Activated CD4-positive, alpha-beta memory T cell treated with anti-CD3 and anti-CD28 coated beads for 36 hours (primary cell): ENCODE measurements at regions of chr10 and their contacts with region 1.

Region 1: GRCh38 chr10:101840741-101841453 is 2.7 kb downstream of the KCNIP2 start:
- DNase-seq: peak; percentile 88
- H3K4me3 Mint-ChIP-seq: peak overlapping the region; percentile 74
- H3K27ac Mint-ChIP-seq: no peak overlapping the region
- H3K4me1 Mint-ChIP-seq: peaks cover 48% of the 10 kb centered on the region
- H3K27me3 Mint-ChIP-seq: peaks cover 2% of the 10 kb centered on the region

Region 2: DNA sequence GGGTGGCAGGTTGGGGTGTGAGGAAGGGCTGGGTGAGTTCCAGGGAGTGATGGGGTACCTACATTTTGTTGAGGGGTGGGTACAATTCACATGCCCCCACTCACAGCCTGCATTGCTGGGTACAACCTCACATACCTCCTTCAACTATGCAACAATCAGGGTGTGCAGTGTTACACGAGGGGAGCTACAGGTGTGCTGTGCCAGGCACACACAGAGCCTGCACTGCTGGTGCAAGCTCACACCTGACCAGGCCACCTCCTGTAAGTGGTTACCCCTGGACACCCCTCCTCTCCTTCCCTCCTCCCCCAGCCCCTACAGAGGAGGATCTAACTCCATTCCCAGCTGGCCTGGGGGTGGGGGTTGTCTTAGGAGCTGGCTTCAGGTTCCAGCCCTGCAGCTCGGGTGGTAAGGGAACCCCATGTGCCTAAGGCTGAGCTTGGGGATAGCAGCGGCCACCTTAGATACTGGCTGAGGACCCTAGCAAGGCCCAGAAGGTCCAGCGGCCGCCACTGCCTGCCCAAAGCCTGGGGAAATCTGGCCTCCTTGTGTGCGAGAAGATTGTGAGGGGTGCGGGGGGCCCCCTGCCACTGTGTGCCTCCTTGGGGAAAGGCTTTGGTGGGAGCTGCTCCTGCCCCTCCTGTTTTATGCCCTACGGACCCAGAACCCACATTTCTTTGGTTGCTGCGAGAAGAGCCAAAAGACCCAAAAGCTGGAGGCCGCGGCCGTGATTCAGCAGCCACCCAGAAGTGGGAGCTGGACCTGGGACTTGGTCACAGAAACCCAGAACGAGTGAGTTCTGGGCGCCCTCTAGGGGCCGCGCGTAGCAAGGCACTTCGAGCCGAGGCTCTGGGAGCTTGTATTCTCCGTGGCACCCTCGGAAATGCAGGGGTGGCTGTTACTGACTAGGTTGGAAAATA is 699.0 kb before region 1 on chr10:
- CTCF ChIA-PET with region 1: no interaction called
- POLR2A ChIA-PET with region 1: no interaction called
- intact Hi-C with region 1: no loop called
- DNase-seq: peak; percentile 88
- H3K4me3 Mint-ChIP-seq: no peak overlapping the region
- H3K27ac Mint-ChIP-seq: no peak overlapping the region
- H3K4me1 Mint-ChIP-seq: peaks cover 22% of the 10 kb centered on the region
- H3K27me3 Mint-ChIP-seq: peaks cover 85% of the 10 kb centered on the region

Region 3: GRCh38 chr10:101818119-101818871 is 22.6 kb before region 1 on chr10 and contains the start of gene OGA:
- CTCF ChIA-PET with region 1: interaction called, 80 read pairs
- POLR2A ChIA-PET with region 1: interaction called, 15 read pairs
- intact Hi-C with region 1: loop called (anchors 1 kb)
- DNase-seq: peak; percentile 99
- H3K4me3 Mint-ChIP-seq: peak within 1 kb of the TSS; percentile 97
- H3K27ac Mint-ChIP-seq: peak within 1 kb of the TSS; percentile 97
- H3K4me1 Mint-ChIP-seq: peaks cover 39% of the 10 kb centered on the region
- H3K27me3 Mint-ChIP-seq: no peaks in the 10 kb centered on the region
- total RNA-seq, gene OGA: 93.2 to 105 TPM

Region 4: DNA sequence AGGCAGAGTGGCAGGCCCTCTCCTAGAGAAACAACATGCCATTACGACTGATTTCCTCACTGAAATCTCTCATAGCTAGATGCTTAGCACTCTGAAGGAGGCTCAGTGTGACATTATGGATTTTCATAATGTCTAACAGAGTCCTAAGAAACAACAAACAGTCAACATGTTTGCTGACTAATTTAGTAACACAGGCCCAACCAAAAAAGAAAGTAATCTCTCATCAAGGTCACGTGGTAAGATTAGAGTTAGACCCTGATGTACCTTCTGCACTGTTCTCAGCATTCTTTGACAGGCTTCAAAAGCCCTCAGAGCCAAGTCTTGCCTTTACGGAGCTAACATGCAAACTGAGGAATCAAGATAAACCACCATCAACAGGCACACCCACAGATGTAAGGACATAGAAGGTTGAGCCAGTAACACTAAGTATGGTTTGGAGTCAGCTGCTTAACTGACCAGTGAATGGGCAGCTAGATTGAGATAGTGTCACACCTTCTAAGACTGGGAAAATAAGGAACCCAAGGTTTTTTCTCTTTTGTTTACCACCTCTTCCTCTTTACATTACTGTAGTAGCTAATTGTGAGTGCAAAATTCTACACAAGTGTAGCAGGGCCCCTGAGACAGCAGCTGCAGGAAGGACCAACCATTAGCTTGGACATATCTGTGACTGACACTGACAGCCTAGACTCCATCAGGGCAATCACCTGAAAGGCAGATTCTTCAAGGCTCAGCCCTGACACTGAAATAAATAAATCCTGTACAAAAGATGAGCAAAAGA is 18.0 kb after region 1 on chr10:
- CTCF ChIA-PET with region 1: interaction called, 36 read pairs
- POLR2A ChIA-PET with region 1: no interaction called
- intact Hi-C with region 1: no loop called
- DNase-seq: no peak
- H3K4me3 Mint-ChIP-seq: no peak overlapping the region
- H3K27ac Mint-ChIP-seq: no peak overlapping the region
- H3K4me1 Mint-ChIP-seq: peaks cover 8% of the 10 kb centered on the region
- H3K27me3 Mint-ChIP-seq: no peaks in the 10 kb centered on the region

Region 5: DNA sequence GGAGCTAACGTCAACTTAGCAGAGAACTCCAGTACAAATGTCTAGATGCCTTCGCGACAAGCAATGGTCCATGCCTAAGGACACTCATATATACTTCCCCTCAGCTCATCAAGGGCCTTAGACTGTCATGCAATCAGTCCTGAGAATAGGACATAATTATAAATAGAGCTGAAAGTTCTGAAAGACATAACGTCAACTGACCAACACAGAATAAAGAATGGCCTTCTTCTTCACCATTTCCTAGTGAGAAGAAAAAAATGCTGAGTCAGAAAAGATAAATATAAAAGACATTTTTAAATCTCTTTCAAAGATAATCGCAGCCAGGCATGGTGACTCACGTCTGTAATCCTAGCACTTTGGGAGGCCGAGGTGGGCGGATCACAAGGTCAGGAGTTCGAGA is 131.9 kb after region 1 on chr10:
- CTCF ChIA-PET with region 1: interaction called, 15 read pairs
- POLR2A ChIA-PET with region 1: no interaction called
- intact Hi-C with region 1: no loop called
- DNase-seq: no peak
- H3K4me3 Mint-ChIP-seq: no peak overlapping the region
- H3K27ac Mint-ChIP-seq: no peak overlapping the region
- H3K4me1 Mint-ChIP-seq: peaks cover 43% of the 10 kb centered on the region
- H3K27me3 Mint-ChIP-seq: no peaks in the 10 kb centered on the region

Region 6: DNA sequence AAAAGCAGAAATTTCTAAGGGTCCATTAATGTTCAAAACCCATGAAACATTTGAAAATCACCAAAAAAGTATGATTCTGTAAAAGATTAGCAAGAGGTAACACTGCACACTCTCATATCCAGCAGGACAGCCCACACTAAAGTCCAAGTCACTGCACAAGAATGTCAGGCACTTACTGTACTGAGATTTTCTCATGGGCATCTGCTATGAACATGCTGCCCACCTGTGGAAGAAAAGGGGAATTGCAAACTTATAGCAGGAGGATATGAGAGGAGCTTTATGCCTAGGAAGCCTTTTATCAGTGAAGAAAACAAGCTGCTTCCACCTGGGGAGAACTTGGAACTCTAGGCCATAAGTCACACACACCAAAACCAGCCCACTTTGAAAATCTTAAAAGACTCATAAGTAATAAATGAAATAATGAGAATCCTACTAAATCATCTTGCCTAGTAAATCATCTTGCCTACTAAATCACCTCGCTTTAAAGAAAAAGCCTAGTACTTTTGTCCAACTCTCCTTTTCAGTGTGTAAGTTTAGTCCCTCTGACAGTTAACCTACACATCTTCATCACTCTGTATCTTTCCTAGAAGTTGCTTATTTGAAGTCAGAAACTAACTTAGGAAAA is 169.0 kb after region 1 on chr10:
- CTCF ChIA-PET with region 1: interaction called, 248 read pairs
- POLR2A ChIA-PET with region 1: interaction called, 10 read pairs
- intact Hi-C with region 1: loop called (anchors 1 kb)
- DNase-seq: peak; percentile 40
- H3K4me3 Mint-ChIP-seq: no peak overlapping the region
- H3K27ac Mint-ChIP-seq: no peak overlapping the region
- H3K4me1 Mint-ChIP-seq: no peaks in the 10 kb centered on the region
- H3K27me3 Mint-ChIP-seq: no peaks in the 10 kb centered on the region

Region 7: GRCh38 chr10:102055647-102056419 is 214.9 kb after region 1 on chr10 and contains the start of gene ARMH3:
- CTCF ChIA-PET with region 1: interaction called, 13 read pairs
- POLR2A ChIA-PET with region 1: no interaction called
- intact Hi-C with region 1: no loop called
- DNase-seq: peak; percentile 95
- H3K4me3 Mint-ChIP-seq: peak within 1 kb of the TSS; percentile 93
- H3K27ac Mint-ChIP-seq: peak within 1 kb of the TSS; percentile 87
- H3K4me1 Mint-ChIP-seq: peaks cover 41% of the 10 kb centered on the region
- H3K27me3 Mint-ChIP-seq: no peaks in the 10 kb centered on the region
- total RNA-seq, gene ARMH3: 16.1 to 18.8 TPM

Region 8: GRCh38 chr10:102114861-102115618 is 274.1 kb after region 1 on chr10:
- CTCF ChIA-PET with region 1: interaction called, 11 read pairs
- POLR2A ChIA-PET with region 1: no interaction called
- intact Hi-C with region 1: no loop called
- DNase-seq: peak; percentile 93
- H3K4me3 Mint-ChIP-seq: peak overlapping the region; percentile 88
- H3K27ac Mint-ChIP-seq: peak overlapping the region; percentile 96
- H3K4me1 Mint-ChIP-seq: peaks cover 58% of the 10 kb centered on the region
- H3K27me3 Mint-ChIP-seq: no peaks in the 10 kb centered on the region